Adrenal gland (tissue), 19 donors: ENCODE measurements at regions of chr13 and their contacts with region 1.

Region 1: DNA sequence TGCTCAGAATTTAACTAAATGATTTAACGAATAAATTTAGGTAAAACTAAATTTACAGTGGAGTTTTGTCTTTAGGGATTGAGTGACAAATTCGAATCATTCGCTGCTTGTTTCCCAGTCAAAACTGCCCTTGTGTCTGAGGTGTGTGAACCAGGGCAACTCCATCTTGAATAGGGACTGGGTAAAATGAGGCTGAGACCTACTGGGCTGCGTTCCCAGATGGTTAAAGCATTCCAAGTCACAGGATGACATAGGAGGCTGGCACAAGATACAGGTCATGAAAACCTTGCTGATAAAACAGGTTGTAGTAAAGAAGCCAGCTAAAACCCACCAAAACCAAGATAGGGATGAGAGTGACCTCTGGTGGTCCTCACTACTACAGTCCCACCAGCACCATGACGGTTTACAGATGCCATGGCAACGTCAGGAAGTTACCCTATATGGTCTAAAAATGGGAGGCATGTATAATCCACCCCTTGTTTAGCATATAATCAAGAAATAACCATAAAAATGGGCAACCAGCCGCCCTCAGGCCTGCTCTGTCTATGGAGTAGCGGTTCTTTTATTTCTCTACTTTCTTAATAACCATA is 10.2 kb upstream of the ANKRD10 start:
- DNase-seq: no peak
- H3K4me3 ChIP-seq: no peak overlapping the region
- H3K27ac ChIP-seq: no peak overlapping the region
- H3K4me1 ChIP-seq: peaks cover 0 to 1% of the 10 kb centered on the region in 2 donors
- H3K27me3 ChIP-seq: no peaks in the 10 kb centered on the region
- CTCF ChIP-seq: no peak
- POLR2A ChIP-seq: no peak

Region 2: DNA sequence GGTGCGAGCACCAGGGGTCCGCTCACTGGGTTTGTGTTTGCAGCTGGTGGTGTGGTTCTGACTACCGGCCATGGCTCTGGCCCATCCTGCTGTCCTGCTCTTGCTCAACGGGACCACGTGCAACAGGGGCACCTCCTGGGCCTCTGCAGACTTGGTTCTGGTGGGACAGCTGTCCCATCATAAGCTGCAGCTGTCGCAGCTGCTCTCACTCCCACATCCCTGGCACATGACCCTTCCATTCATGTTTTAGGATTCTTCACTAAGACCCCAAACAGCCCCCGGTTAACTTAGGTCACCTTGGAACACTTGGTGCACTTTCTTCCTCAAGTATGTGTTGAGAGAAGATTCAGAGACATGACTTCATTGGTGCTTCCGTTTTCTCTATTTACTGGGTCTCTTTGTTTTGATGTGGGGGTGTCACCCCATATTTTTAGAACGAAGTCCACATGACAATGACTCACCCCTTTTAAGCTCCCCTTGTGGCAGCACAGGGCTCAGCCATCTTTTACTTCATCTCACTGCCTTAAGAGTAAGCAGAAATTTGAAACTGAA is 121.5 kb after region 1 on chr13:
- intact Hi-C with region 1: loop called (anchors 5 kb)
- DNase-seq: peak in 2 of 7 donors; percentile 15 to 31
- H3K4me3 ChIP-seq: no peak overlapping the region
- H3K27ac ChIP-seq: peak overlapping the region in 1 of 5 donors; percentile 59
- H3K4me1 ChIP-seq: no peaks in the 10 kb centered on the region
- H3K27me3 ChIP-seq: no peaks in the 10 kb centered on the region
- CTCF ChIP-seq: peak in 3 of 6 experiments; percentile 12 to 41 (median 28)
- POLR2A ChIP-seq: no peak

Region 3: DNA sequence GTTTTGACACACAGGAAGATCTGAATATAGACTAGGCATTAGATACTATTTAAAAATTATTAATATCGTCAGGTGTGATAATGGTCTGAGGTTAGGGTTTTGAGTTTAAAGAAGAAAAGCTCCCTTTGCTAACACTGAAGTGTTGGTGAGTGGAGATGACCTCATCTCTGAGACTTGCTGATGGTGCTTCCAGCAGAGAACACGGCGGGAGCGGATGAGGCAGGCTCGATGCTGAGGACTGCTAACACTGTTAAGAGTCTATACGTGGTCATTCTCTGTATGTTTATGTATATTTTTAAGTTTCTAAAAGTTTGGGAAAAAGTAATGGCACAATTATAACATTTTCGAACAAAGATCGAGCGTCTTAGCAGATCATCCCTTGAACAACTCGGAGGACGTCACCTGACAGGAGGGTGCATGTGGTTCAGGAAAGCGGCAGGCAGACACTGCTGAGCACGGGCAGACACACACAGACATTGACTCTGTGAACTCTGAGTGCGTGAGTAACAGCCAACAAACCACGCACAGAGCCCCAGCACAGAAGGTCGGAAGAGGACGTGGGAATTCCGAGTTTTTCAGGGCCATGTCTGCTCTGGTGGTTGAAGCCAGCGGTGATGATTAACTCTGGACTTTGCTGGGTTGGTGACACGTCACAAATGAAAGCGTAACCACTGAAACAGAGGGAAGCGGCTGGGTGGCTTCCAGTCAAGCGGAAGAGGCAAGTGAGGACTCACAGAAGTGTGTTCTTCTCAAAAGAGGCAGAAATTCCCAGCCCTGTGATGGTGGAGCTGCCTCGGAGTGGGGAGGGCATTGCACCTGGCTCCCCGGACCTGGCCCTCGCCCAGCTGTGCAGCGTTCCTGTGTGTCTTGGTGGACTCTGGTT is 303.4 kb after region 1 on chr13:
- intact Hi-C with region 1: loop called in 1 of 2 experiments (anchors 10 kb)
- DNase-seq: peak in 3 of 7 donors; percentile 32 to 47 (median 35)
- H3K4me3 ChIP-seq: no peak overlapping the region
- H3K27ac ChIP-seq: no peak overlapping the region
- H3K4me1 ChIP-seq: peaks cover 0 to 5% of the 10 kb centered on the region in 2 donors
- H3K27me3 ChIP-seq: no peaks in the 10 kb centered on the region
- CTCF ChIP-seq: no peak
- POLR2A ChIP-seq: no peak